ENCODE measurements at regions of chr4 and their contacts with region 1.

Region 1: DNA sequence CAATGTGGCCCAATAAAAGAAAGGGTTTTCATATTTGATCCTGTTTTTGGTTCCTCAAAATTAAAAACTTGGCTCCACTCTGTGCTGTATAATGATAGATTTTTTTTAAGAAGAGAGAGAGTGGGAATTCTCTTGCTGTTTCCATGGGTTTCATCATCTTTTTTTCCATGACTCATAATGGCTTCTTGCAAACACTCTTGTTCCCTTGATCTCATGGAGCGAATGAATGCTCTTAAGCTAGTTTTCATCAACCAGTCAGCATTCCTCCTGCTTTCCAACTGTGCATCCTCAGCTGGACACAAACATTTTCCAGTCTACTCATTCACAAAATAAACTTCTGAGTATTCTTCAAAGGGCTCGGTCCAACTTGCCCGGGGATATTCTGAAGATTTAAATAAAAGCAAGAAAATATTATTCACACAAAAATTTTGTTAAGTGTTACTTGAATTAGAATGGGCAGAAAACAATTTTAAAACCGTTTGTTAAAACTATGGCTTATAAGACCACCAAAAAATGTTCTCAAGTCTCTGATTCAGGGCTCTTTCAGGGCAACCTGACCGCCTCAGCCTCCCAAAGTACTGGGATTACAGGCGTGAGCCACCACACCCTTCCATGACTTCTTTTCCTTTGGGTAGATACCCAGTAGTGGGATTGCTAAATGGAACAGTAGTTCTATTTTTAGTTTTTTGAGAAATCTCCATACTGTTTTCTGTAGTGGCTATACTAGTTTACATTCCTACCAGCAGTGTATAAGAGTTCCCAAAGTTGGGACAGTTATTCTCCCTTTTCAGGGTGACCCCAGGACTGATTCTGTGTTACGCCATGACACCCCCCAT is 64.7 kb downstream of the TMEM156 start:
- DNase-seq: no peak
- ATAC-seq: no peak
- H3K4me3 Mint-ChIP-seq: no peak overlapping the region
- H3K27ac Mint-ChIP-seq: peak overlapping the region; percentile 25
- H3K4me1 Mint-ChIP-seq: peaks cover 7% of the 10 kb centered on the region
- H3K27me3 Mint-ChIP-seq: no peaks in the 10 kb centered on the region
- CTCF ChIP-seq: no peak

Region 2: DNA sequence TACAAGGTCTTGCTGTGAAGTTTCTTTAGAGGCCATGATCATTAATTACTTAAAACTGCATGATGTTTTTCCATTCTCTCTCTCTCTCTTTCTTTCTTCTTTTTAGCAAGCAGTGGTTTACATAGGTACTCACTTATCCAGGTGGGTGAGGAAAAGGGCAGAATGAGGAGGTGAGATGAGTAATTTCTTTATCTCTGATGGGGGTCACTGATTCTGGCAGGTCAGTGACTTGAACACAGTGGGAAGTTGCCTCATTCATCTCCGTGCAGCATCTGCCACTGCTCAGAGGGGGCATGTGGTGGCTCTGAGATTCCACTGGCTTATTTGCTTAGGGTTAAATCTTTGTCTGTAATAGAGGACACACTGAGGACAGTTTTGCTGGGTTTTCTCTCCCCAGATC is 37.3 kb before region 1 on chr4:
- CTCF ChIA-PET with region 1: no interaction called
- POLR2A ChIA-PET with region 1: no interaction called
- intact Hi-C with region 1: loop called (anchors 5 kb)
- DNase-seq: no peak
- ATAC-seq: no peak
- H3K4me3 Mint-ChIP-seq: no peak overlapping the region
- H3K27ac Mint-ChIP-seq: no peak overlapping the region
- H3K4me1 Mint-ChIP-seq: no peaks in the 10 kb centered on the region
- H3K27me3 Mint-ChIP-seq: no peaks in the 10 kb centered on the region
- CTCF ChIP-seq: no peak

Region 3: GRCh38 chr4:39014028-39014427 is 46.5 kb after region 1 on chr4:
- CTCF ChIA-PET with region 1: no interaction called
- POLR2A ChIA-PET with region 1: no interaction called
- intact Hi-C with region 1: no loop called
- DNase-seq: no peak
- ATAC-seq: no peak
- H3K4me3 Mint-ChIP-seq: no peak overlapping the region
- H3K27ac Mint-ChIP-seq: no peak overlapping the region
- H3K4me1 Mint-ChIP-seq: peaks cover 47% of the 10 kb centered on the region
- H3K27me3 Mint-ChIP-seq: no peaks in the 10 kb centered on the region
- CTCF ChIP-seq: no peak

Region 4: GRCh38 chr4:39029752-39030694 is 62.5 kb after region 1 on chr4:
- CTCF ChIA-PET with region 1: no interaction called
- POLR2A ChIA-PET with region 1: no interaction called
- intact Hi-C with region 1: no loop called
- DNase-seq: no peak
- ATAC-seq: peak; percentile 25
- H3K4me3 Mint-ChIP-seq: peak overlapping the region; percentile 83
- H3K27ac Mint-ChIP-seq: peak overlapping the region; percentile 93
- H3K4me1 Mint-ChIP-seq: peaks cover 64% of the 10 kb centered on the region
- H3K27me3 Mint-ChIP-seq: no peaks in the 10 kb centered on the region
- CTCF ChIP-seq: no peak

Measured in activated B cell treated with CpG ODN at 0.5 μM for 24 hours (primary cell).